PC-9 (cell line): ENCODE measurements at regions of chr9 and their contacts with region 1.

Region 1: GRCh38 chr9:133356391-133357091 is at the starts of genes SURF1 and SURF2:
- DNase-seq: peak; percentile 73 to 90
- H3K4me3 ChIP-seq: peak within 1 kb of the TSS; percentile 88
- H3K27ac ChIP-seq: 0 out of 2 replicates have a peak within 1 kb of the TSS, but pooled peaks have one; percentile 16
- H3K4me1 ChIP-seq: peaks cover 16% of the 10 kb centered on the region
- H3K27me3 ChIP-seq: no peaks in the 10 kb centered on the region
- CTCF ChIP-seq: no peak
- total RNA-seq, gene SURF1: 57.7 and 69.1 TPM in 2 replicates
- total RNA-seq, gene SURF2: 18.1 and 28.6 TPM in 2 replicates

Region 2: GRCh38 chr9:133238851-133239532 is 117.5 kb before region 1 on chr9:
- CTCF ChIA-PET with region 1: no interaction called
- POLR2A ChIA-PET with region 1: interaction called, 18 read pairs
- intact Hi-C with region 1: no loop called
- DNase-seq: peak in 1 of 2 experiments; percentile 83
- H3K4me3 ChIP-seq: no peak overlapping the region
- H3K27ac ChIP-seq: no peak overlapping the region
- H3K4me1 ChIP-seq: no peaks in the 10 kb centered on the region
- H3K27me3 ChIP-seq: no peaks in the 10 kb centered on the region
- CTCF ChIP-seq: peak; percentile 71

Region 3: DNA sequence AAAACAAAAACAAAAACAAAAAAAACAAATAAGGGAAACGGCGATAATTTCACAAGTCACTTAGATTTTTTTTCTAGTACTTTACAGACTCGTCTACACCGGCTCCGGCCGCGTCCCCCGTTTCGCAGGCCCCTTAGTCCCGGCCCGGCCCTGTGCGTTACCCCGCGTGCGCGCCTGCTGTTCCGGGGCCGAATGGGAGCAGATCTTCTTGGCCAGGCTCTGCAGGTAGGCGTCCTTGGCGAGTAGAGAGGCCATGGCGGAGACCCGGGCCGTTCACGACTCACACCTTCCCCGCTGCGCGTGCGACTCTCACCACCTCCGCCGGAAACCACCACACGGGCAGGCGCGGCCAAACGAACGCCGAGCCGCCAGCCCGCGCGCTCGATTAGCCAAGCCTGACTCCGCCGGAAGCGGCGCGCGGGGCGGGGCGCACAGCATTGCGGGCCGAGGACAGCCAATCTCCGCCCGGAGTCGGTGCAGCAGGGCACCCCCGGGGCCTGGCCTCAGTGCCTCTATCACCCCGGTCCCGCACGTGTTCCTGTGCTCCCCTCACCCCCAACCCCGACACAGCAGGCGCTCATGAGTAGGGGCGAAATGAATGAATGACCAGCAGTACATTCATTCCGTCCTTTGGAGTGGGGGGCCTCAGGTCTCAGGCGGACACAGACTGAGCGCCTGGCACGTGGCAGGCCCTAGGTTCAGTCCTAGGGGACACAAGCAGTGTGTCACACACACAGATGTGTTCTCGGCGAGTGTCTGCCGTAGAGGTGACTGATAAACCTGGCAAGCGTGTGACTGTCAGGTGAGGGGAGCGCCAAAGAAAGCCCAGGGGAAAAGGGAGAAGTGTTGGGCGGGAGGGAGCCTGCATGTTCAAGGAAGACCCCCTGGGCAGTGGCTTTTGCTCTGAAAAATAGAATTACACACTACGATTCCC is 20.4 kb before region 1 on chr9 and contains the start of gene SURF6:
- CTCF ChIA-PET with region 1: interaction called, 7 read pairs
- POLR2A ChIA-PET with region 1: interaction called, 22 read pairs
- intact Hi-C with region 1: no loop called
- DNase-seq: peak; percentile 76 to 92
- H3K4me3 ChIP-seq: peak within 1 kb of the TSS; percentile 94
- H3K27ac ChIP-seq: peak within 1 kb of the TSS; percentile 48
- H3K4me1 ChIP-seq: peaks cover 15% of the 10 kb centered on the region
- H3K27me3 ChIP-seq: no peaks in the 10 kb centered on the region
- CTCF ChIP-seq: no peak
- total RNA-seq, gene SURF6: 21.2 and 29.8 TPM in 2 replicates

Region 4: DNA sequence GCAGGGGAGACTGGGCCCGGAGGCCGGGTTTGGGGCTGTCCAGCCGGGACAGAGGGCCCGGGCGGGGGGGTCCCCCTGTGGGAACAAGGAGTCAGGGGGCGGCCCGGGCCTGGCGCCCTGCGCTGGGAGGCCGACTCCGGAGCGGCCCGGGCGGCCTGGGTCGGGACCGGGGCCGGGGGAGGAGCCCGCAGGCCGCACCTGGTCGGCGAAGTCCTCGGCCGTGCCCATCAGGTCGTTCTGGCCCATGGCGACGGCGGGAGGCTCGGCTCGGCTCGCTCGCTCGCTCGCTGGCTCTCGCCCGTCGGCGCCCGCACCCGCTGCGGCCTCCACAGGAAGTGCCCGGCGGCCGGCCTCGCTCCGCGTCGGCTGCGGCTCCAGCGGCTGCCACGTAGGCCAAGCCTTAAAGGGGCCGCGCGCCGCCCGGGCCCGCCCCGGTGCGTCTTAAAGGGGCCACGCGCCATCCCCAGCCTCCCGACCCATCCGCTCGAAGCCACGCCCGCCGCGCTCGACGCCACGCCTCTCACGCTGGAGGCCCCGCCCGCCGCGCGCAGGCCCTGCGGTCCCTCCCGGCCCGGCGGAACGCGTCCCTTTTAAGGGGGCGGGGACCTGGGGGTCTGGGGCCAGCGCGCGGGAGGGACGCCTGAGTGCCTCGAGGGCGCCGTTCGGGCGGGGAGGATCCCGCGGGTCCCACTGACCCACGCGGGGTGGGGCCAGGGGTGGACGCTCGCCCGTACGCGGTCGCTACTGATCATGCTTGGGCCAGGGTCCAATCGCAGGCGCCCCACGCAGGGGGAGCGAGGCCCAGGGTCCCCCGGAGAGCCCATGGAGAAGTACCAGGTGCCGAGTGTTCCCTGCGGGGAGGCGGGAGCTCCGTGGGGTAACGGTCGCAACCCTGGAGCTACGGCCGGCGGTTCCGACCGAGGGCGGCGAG is 19.4 kb after region 1 on chr9 and contains the starts of genes STKLD1 and SURF4:
- CTCF ChIA-PET with region 1: interaction called, 9 read pairs
- POLR2A ChIA-PET with region 1: interaction called, 6 read pairs
- intact Hi-C with region 1: loop called (anchors 2 kb)
- DNase-seq: peak; percentile 80 to 99
- H3K4me3 ChIP-seq: peak within 1 kb of the TSS; percentile 69
- H3K27ac ChIP-seq: peak within 1 kb of the TSS; percentile 59; the same call in 1 of the 2 replicates
- H3K4me1 ChIP-seq: peaks cover 36% of the 10 kb centered on the region
- H3K27me3 ChIP-seq: no peaks in the 10 kb centered on the region
- CTCF ChIP-seq: no peak
- total RNA-seq, gene STKLD1: 3.1 and 4.8 TPM in 2 replicates
- total RNA-seq, gene SURF4: 199 and 233 TPM in 2 replicates

Region 5: GRCh38 chr9:133387425-133388079 is 31.0 kb after region 1 on chr9:
- CTCF ChIA-PET with region 1: no interaction called
- POLR2A ChIA-PET with region 1: interaction called, 23 read pairs
- intact Hi-C with region 1: no loop called
- DNase-seq: peak in 1 of 2 experiments; percentile 42
- H3K4me3 ChIP-seq: no peak overlapping the region
- H3K27ac ChIP-seq: no peak overlapping the region
- H3K4me1 ChIP-seq: no peaks in the 10 kb centered on the region
- H3K27me3 ChIP-seq: peaks cover 15% of the 10 kb centered on the region; the same call in 1 of the 2 replicates
- CTCF ChIP-seq: no peak

Region 6: DNA sequence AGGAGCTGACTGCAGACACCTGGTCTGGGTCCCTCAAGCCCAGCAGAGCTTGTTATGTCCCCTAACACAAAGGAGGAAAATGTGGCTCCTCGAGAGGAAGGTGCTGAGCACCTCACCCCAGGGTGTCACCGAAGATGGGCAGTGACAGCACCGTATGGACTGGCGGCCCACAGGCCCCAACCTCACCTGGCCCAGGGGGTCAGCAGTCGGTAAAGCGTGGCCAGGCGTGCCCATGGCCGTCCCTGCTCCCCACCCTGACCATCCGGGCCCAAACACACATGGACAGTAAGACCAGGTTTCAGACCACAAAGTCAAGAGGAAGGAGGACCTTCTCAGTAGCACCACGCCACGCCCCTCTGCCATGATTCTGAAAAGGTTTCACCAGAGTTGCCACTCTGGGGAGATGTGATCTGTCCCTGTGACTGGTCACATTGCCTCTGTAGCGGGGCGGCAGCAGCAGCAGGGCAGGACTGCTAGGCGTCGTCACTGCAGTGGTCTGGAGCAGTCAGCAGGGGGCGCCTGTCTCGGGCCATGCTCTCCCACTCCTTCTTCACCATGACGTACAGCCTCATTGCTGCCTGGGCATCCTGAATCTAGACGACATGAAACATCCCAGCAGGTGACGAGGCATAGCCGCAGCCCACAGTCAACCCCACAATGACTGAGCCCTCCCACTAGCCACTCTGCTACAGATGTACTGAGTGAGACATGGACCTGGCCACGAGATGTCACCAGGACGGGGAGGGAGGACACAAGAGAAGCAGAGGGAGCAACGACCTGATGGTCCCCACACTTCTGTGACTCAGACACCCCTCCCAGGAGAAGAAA is 50.2 kb after region 1 on chr9:
- CTCF ChIA-PET with region 1: no interaction called
- POLR2A ChIA-PET with region 1: no interaction called
- intact Hi-C with region 1: loop called (anchors 2 kb)
- DNase-seq: peak; percentile 37 to 74
- H3K4me3 ChIP-seq: no peak overlapping the region
- H3K27ac ChIP-seq: no peak overlapping the region
- H3K4me1 ChIP-seq: no peaks in the 10 kb centered on the region
- H3K27me3 ChIP-seq: no peaks in the 10 kb centered on the region
- CTCF ChIP-seq: peak; percentile 89

Region 7: DNA sequence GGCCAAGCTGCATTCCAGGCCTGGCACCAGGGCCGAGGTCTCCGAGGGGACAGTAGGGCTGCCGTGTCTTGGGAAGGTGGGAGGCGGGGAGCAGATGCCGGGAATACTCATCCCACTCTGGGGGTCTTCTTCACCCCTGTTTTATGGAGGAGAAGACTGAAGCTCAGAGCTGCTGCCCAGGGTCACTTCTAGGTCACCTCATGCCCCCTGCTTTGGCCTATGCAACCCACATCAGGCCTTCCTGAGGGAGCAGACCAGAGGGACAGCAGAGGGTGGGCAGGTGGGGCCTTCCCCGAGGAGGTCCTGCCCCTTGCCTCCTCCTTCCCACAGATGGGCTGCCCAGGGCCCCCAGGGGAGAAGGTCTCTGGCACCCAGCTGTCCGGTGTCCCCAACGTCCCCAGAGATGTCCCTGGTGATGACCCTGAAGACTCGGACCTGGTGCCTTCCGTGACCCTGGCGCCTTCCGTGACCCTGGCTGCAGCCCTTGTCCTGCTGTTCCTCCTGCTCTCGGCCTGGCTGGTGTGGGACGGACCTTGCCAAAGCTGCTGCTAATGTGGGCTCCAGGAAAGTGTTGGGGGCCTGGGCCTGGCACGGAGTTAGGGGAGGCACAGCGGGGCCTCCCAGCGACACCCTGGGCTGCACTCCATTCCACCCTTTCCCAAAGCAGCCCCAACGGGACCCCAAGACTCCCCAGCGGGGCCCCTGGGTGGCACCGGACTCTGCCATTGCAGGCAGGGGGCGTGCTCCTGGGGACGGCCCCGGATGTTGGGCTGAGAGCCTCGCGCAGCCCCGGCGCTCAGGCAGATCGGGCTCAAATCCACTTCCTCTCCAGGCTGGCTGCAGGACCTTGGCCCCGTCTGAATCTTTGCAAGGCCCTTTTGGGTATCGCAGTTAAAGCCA is 129.1 kb after region 1 on chr9:
- CTCF ChIA-PET with region 1: interaction called, 3 read pairs
- POLR2A ChIA-PET with region 1: no interaction called
- intact Hi-C with region 1: loop called (anchors 5 kb)
- DNase-seq: no peak
- H3K4me3 ChIP-seq: peak overlapping the region; percentile 7; the same call in 1 of the 2 replicates
- H3K27ac ChIP-seq: no peak overlapping the region
- H3K4me1 ChIP-seq: peaks cover 38% of the 10 kb centered on the region
- H3K27me3 ChIP-seq: peaks cover 20% of the 10 kb centered on the region
- CTCF ChIP-seq: no peak